Gastrocnemius medialis (tissue), 4 donors: ENCODE measurements at regions of chr11 and their contacts with region 1.

Region 1: DNA sequence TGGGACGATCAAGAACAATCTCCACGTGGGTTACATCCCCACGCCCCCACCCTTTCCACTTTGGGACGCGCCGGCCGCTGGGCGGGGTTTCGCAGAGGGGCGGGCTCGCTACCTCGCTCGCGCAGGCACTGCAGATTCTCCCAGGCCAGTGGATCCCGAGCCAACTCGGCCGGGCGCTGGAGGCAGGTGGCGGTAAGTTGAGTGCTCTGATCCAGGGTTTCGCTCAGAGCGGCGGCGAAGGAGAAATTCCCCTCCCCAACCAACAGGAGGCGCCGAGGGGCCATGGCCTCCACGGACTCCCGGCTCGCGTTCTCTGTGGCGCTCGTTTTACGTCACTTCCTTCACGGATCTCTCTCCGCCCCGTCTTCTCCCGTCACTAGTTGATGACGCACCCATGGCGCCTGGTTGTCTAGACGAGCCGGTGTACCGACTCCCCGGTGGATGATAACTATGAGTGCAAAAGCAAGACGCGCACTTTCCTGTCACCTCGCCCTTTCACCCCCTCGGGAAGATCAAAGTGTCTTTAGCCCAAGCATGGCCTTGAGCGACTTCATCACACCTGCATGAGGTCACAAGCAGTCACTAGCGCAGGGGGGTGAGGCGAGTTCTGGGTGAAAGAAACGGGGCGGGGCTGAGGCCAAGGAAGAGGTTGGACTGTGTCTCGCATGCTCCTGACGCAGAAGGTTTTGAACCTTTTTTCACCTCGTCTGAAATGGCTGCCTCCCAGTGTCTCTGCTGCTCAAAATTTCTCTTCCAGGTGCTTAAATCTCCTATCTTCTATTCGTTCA is at the starts of genes CFAP68 and FDXACB1:
- DNase-seq: peak; percentile 97 to 98
- ATAC-seq: peak; percentile 92 to 93
- H3K4me3 ChIP-seq: peak within 1 kb of the TSS; percentile 58 to 75 (median 68)
- H3K27ac ChIP-seq: peak within 1 kb of the TSS; percentile 81 to 92 (median 88)
- H3K4me1 ChIP-seq: peaks cover 8 to 19% of the 10 kb centered on the region in 2 donors
- H3K27me3 ChIP-seq: no peaks in the 10 kb centered on the region
- CTCF ChIP-seq: peak; percentile 97 to 99 (median 98)
- POLR2A ChIP-seq: peak; percentile 47 to 69
- total RNA-seq, gene CFAP68: 8.2 to 20.9 (median 9.8) TPM
- total RNA-seq, gene FDXACB1: 0.11 to 0.91 (median 0.29) TPM

Region 2: GRCh38 chr11:111911563-111912401 is 32.7 kb after region 1 on chr11 and contains the start of gene CRYAB:
- in situ Hi-C with region 1: loop called in 1 of 4 experiments (anchors 5 kb)
- intact Hi-C with region 1: loop called (anchors 2 kb)
- DNase-seq: peak; percentile 97 to 99
- ATAC-seq: peak; percentile 87
- H3K4me3 ChIP-seq: peak within 1 kb of the TSS; percentile 70 to 79 (median 74)
- H3K27ac ChIP-seq: peak within 1 kb of the TSS; percentile 91 to 97 (median 97)
- H3K4me1 ChIP-seq: peaks cover 22 to 45% of the 10 kb centered on the region in 2 donors
- H3K27me3 ChIP-seq: no peaks in the 10 kb centered on the region
- CTCF ChIP-seq: no peak
- POLR2A ChIP-seq: peak; percentile 98 to 99
- total RNA-seq, gene CRYAB: 763 to 2,291 (median 1,427) TPM

Region 3: DNA sequence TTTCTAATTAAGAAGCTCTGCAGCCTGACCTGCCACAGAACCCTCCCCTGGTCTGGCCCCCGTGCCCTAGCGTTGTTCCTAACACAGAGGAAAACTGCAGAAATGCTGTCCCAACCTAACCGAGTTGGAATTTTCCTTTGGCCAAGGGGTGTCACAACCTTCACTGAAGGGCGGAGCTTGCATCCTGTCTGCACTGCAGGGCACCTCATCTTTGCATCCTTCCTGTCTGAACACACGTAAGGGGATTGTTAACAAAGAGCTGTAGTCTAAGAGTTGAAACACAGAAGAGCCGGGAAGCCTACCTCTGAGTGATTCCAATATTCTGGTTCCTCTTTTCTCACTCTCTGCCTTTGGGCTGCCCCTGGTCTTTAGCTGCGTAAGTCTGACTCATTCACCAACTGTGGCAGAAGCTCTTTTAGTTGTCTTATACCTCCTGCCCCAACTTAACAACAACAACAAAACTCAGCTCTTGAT is 59.7 kb after region 1 on chr11:
- in situ Hi-C with region 1: loop called in 1 of 4 experiments (anchors 10 kb)
- intact Hi-C with region 1: no loop called
- DNase-seq: no peak
- ATAC-seq: peak in 1 of 2 donors; percentile 32
- H3K4me3 ChIP-seq: no peak overlapping the region
- H3K27ac ChIP-seq: peak overlapping the region; percentile 73 to 88 (median 82)
- H3K4me1 ChIP-seq: peaks cover 34 to 70% of the 10 kb centered on the region in 2 donors
- H3K27me3 ChIP-seq: no peaks in the 10 kb centered on the region
- CTCF ChIP-seq: no peak
- POLR2A ChIP-seq: no peak

Region 4: DNA sequence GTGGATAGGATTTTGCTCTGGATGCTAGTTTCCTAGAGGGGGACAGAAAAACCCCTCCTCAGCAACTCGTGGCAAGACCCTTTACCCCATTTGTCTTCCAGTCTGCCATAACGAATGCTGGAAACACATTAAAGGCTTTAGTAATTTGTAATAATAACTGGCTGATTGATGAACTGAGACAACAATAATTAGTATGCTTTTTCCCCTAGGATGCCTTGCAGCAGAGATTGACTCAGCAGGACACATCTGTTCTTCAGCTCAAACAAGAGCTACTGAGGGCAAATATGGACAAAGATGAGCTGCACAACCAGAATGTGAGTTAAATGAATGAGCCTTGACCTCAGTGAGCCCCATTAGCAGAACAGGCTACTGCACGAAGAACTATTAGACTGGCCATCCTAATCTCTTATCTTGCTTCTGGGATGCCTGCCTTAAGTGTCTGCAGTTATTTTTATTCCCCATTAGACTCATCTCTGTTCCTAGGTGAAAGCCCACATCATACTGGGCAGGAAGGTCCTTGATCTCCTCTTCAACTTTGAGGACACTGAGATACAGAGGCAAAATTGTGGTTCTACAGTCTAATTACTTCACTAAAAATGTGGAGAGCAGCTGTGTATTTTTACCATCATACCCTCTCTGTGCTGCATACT is 113.3 kb after region 1 on chr11:
- in situ Hi-C with region 1: loop called (anchors 10 kb)
- intact Hi-C with region 1: loop called (anchors 2 kb)
- DNase-seq: no peak
- ATAC-seq: no peak
- H3K4me3 ChIP-seq: no peak overlapping the region
- H3K27ac ChIP-seq: peak overlapping the region; percentile 84 to 94 (median 88)
- H3K4me1 ChIP-seq: peaks cover 21 to 31% of the 10 kb centered on the region in 2 donors
- H3K27me3 ChIP-seq: no peaks in the 10 kb centered on the region
- CTCF ChIP-seq: no peak
- POLR2A ChIP-seq: no peak

Region 5: DNA sequence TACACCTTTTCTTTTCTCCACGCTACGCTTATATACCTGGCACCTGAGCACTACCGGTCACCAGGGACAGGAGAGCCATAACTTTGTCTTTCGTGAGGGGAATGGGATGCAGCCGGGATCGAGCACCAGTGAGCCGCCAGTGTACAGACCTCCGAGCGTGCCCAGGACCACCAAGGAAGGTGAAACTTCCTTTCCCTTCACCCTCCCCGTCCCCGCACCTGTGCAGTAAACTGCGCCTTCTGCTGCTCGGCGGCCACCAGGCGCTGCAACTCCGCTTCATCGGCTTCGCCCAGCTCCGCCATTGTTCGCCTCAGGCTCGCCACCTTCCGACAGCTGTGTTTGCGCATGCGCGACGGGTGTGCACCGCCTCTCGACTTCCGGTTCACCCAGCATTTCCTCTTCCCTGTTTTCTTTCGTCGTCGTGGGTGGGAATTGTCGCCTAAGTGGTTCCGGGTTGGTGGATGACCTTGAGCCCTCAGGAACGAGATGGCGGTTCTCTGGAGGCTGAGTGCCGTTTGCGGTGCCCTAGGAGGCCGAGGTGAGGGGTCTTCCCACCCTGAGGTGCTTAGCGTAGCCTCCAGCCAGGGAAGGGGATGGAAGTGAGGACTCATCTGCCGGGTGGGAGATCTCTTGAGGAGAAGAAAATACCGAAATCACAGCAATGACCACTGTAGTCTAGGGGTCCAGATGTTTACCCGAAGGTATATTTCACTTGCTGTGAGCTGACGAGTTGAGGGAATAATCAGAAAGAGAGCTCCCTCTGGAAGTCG is 207.6 kb after region 1 on chr11 and contains the starts of genes SDHD and TIMM8B:
- in situ Hi-C with region 1: loop called in 1 of 4 experiments (anchors 10 kb)
- intact Hi-C with region 1: loop called (anchors 5 kb)
- DNase-seq: peak; percentile 94 to 96
- ATAC-seq: peak; percentile 96 to 97
- H3K4me3 ChIP-seq: peak within 1 kb of the TSS; percentile 82 to 99 (median 90)
- H3K27ac ChIP-seq: peak within 1 kb of the TSS; percentile 79 to 97 (median 90)
- H3K4me1 ChIP-seq: peaks cover 49 to 66% of the 10 kb centered on the region in 2 donors
- H3K27me3 ChIP-seq: no peaks in the 10 kb centered on the region
- CTCF ChIP-seq: peak in 4 of 5 experiments; percentile 19 to 39 (median 33)
- POLR2A ChIP-seq: peak; percentile 86 to 92
- total RNA-seq, gene SDHD: 170 to 261 (median 202) TPM
- total RNA-seq, gene TIMM8B: 60.3 to 93.2 (median 69.4) TPM

Region 6: DNA sequence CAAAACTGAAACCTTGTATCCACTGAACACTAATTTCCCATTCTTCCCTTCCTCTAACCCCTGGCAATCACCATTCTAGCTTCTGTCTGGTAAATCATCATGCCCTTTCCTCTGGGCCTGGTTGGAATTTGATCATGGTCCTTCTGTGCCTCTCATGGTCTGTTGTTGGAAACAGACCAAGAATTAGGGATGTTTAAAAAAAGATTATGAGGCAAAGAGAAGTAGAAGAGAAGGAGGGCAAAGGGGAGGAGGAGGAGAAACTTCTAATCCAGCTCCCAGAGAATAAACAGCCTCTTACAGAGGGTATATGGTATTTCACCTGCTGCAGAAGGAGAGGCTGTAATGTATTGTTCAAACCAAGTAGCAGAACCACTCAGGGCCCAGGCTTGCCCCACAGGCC is 306.8 kb after region 1 on chr11:
- in situ Hi-C with region 1: no loop called
- intact Hi-C with region 1: no loop called
- DNase-seq: no peak
- ATAC-seq: peak; percentile 52 to 74
- H3K4me3 ChIP-seq: no peak overlapping the region
- H3K27ac ChIP-seq: peak overlapping the region; percentile 42 to 70 (median 53)
- H3K4me1 ChIP-seq: peaks cover 15 to 17% of the 10 kb centered on the region in 2 donors
- H3K27me3 ChIP-seq: no peaks in the 10 kb centered on the region
- CTCF ChIP-seq: no peak
- POLR2A ChIP-seq: no peak